Activated T-helper 2 cell treated with anti-CD3 and anti-CD28 coated beads, Interferon-gamma antibody, Interleukin-2, Interleukin-4, amounts not matched to agents 10 μg/mL and 5 μg/mL and 100 μg/mL, durations not matched to agents 14 hours and 24 hours and 36 hours (primary cell): ENCODE measurements at regions of chr2 and their contacts with region 1.

Region 1: GRCh38 chr2:8324164-8324856 is 357.5 kb upstream of the ID2 start:
- DNase-seq: peak; percentile 31
- H3K4me3 Mint-ChIP-seq: no peak overlapping the region
- H3K27ac Mint-ChIP-seq: peak overlapping the region; percentile 4
- H3K4me1 Mint-ChIP-seq: peaks cover 49% of the 10 kb centered on the region
- H3K27me3 Mint-ChIP-seq: peaks cover 19% of the 10 kb centered on the region

Region 2: GRCh38 chr2:7703523-7704144 is 620.7 kb before region 1 on chr2:
- intact Hi-C with region 1: no loop called
- DNase-seq: no peak
- H3K4me3 Mint-ChIP-seq: no peak overlapping the region
- H3K27ac Mint-ChIP-seq: no peak overlapping the region
- H3K4me1 Mint-ChIP-seq: peaks cover 16% of the 10 kb centered on the region
- H3K27me3 Mint-ChIP-seq: no peaks in the 10 kb centered on the region

Region 3: DNA sequence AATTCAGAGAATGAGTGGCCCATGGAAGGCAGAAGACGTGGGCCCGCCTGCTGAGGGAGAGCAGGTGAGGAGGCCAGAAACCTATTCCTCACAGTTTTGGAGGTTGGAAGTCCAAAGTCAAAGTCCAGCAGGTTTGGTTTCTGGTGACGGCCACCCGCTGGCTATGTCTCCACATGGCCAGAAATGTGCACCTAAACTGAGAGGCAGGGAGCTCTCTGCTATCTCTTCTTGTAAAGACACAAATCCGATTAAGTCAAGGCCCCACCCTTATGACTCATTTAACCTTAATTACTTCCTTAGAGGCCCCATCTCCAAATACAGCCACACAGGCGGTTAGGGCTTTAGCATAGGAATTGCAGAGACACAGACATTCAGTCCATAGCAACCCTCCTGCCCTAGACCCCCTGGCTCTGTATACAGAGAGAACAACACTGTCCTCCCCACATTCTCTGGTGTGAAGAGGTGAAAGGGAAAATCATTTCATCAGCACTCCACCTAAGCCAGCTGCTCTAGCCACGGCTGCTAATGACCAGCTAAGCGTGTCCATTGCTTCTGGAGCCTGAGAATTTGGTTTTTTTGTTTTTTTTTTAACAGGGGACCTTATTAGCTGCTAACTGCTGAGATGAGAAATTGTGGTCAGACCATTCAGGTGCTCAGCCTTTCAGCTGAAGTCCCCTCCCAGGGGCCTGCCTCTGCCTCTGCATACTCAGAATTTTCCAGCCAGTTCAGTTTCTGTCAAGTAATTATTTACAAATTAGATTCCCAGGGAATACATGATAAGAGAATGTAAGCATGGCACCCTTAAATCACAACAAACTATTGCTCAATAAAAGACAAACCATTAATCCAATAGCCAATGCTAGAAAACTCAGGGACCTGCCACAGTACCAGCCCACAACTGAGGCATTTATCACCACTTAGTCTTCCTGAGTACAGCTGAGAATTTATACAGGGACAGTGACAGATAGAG is 11.2 kb before region 1 on chr2:
- intact Hi-C with region 1: loop called (anchors 2 kb)
- DNase-seq: no peak
- H3K4me3 Mint-ChIP-seq: no peak overlapping the region
- H3K27ac Mint-ChIP-seq: no peak overlapping the region
- H3K4me1 Mint-ChIP-seq: peaks cover 60% of the 10 kb centered on the region
- H3K27me3 Mint-ChIP-seq: peaks cover 22% of the 10 kb centered on the region

Region 4: DNA sequence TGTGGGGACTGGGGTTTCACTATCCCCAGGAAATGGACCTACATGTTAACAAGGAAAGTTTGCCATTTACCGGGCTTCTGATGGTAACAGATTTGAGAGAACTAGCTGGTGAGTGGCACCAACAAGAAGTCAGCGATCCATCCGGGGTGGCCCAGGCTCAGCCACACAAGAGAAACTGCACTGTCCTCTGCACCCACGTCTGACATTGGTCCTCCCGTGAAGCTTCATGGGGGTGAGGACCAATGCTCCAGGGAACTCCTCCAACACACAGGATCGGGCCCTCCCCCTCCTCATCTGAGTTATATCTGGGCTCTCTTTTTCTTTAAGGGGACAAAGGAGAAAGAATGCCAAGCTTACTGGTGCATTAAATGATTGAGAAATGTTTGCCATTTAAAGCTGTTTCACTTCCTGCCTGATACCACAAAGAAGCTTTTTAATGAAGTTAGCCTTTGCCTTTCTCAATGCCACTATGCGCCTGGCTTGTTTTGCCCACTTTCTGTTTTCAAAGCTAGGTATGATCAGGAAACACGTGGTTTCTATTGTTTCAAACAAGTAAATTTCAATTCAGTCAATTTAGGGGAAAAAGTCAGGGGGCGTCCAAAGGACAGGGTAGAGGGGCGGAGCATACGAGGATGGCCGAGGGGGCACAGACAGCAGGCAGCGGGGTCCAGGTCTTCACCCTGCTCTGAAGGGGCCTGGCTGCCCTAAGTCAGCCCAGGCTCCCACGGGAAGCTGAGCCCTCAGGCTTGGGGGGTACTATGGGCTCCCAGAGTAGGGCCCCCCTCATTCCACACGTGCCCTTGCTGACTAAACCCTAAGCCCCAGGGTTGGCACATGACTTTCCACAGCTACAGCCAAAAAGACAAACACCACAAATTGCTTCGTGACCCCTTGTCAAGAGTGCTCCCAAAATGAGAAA is 153.5 kb after region 1 on chr2:
- intact Hi-C with region 1: loop called (anchors 5 kb)
- DNase-seq: no peak
- H3K4me3 Mint-ChIP-seq: peak overlapping the region; percentile 5
- H3K27ac Mint-ChIP-seq: peak overlapping the region; percentile 72
- H3K4me1 Mint-ChIP-seq: peaks cover 79% of the 10 kb centered on the region
- H3K27me3 Mint-ChIP-seq: no peaks in the 10 kb centered on the region